CD8-positive, alpha-beta T cell (primary cell): ENCODE measurements at regions of chr6 and their contacts with region 1.

Region 1: DNA sequence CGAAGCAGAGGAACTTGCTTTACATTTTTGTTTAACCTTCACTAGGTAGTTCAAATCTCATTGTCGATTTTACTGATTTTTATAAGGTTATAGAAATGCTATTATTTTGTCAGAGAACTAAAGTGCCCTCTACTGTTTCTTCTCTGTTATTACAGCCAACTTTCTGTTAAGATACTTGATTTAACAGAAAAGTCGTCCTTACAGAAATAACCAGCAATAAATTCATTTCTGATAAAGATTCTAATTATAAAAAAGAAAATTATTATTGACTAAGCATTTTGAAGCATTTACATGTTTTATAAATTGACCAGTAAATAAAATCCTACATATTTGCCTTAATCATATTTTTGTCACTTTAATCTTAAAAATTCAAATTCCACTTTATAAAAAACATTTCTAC is 60.8 kb downstream of the OGFRL1 start:
- DNase-seq: peak in 2 of 9 experiments; percentile 39 to 49
- ATAC-seq: no peak
- H3K4me3 ChIP-seq: no peak overlapping the region
- H3K4me3 Mint-ChIP-seq: no peak overlapping the region
- H3K27ac ChIP-seq: no peak overlapping the region
- H3K27ac Mint-ChIP-seq: no peak overlapping the region
- H3K4me1 ChIP-seq: no peaks in the 10 kb centered on the region
- H3K4me1 Mint-ChIP-seq: no peaks in the 10 kb centered on the region
- H3K27me3 ChIP-seq: no peaks in the 10 kb centered on the region
- H3K27me3 Mint-ChIP-seq: no peaks in the 10 kb centered on the region
- CTCF ChIP-seq: peak; percentile 90

Region 2: GRCh38 chr6:70700922-70701876 is 648.2 kb before region 1 on chr6:
- CTCF ChIA-PET with region 1: no interaction called
- POLR2A ChIA-PET with region 1: no interaction called
- intact Hi-C with region 1: loop called in 1 of 2 experiments (anchors 5 kb)
- DNase-seq: no peak
- ATAC-seq: no peak
- H3K4me3 ChIP-seq: no peak overlapping the region
- H3K4me3 Mint-ChIP-seq: no peak overlapping the region
- H3K27ac ChIP-seq: no peak overlapping the region
- H3K27ac Mint-ChIP-seq: no peak overlapping the region
- H3K4me1 ChIP-seq: no peaks in the 10 kb centered on the region
- H3K4me1 Mint-ChIP-seq: peaks cover 66% of the 10 kb centered on the region
- H3K27me3 ChIP-seq: no peaks in the 10 kb centered on the region
- H3K27me3 Mint-ChIP-seq: no peaks in the 10 kb centered on the region
- CTCF ChIP-seq: no peak

Region 3: GRCh38 chr6:71190809-71191208 is 158.6 kb before region 1 on chr6:
- CTCF ChIA-PET with region 1: interaction called, 60 read pairs
- POLR2A ChIA-PET with region 1: no interaction called
- intact Hi-C with region 1: loop called (anchors 1 kb)
- DNase-seq: peak in 2 of 9 experiments; percentile 42 to 47
- ATAC-seq: no peak
- H3K4me3 ChIP-seq: no peak overlapping the region
- H3K4me3 Mint-ChIP-seq: no peak overlapping the region
- H3K27ac ChIP-seq: no peak overlapping the region
- H3K27ac Mint-ChIP-seq: no peak overlapping the region
- H3K4me1 ChIP-seq: no peaks in the 10 kb centered on the region
- H3K4me1 Mint-ChIP-seq: no peaks in the 10 kb centered on the region
- H3K27me3 ChIP-seq: no peaks in the 10 kb centered on the region
- H3K27me3 Mint-ChIP-seq: peaks cover 5% of the 10 kb centered on the region
- CTCF ChIP-seq: peak; percentile 52